ENCODE measurements at regions of chr2 and their contacts with region 1.

Region 1: DNA sequence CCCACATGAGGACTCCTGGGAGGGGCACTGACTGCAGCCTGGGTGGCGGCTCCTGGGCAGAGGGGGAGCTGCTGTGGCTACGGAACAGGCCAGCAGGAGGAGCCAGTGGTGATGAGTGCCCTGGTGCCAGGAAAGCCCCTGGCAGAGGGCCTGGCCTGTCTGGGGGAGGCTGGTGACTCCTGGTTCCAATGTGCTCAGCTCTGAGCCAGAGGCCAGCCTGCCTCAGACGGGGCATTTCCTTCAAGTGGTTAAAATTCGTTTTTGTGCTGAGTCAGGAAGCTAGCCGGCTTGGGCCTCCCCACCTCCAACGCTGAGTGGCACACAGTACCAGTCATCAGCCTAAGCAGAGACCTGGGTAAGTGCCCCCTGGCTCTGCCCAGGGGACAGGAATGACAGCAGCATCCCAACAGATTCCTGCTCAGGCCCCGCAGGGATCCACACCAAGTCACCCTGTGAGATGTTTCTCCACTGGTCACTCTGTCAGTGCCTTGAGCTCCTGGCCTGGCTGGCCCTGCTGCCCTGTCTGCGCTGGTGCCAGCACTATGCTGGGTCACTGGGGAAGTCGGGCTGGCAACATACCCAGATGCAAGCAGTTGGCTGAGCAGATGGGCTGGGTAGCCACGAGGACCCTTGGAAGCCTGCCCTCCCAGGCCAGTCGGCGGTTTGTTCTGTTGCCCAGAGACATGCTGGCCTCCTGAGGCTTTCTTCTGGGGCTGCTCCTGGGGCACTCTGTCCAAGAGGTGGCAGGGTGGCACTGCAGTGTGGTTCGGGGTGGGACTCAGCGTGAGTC is 7.1 kb upstream of the KLF11 start:
- DNase-seq: peak; percentile 82
- H3K4me3 ChIP-seq: no peak overlapping the region
- H3K27ac ChIP-seq: no peak overlapping the region
- H3K4me1 ChIP-seq: peaks cover 11% of the 10 kb centered on the region
- H3K27me3 ChIP-seq: no peaks in the 10 kb centered on the region
- CTCF ChIP-seq: peak; percentile 51 to 72

Region 2: DNA sequence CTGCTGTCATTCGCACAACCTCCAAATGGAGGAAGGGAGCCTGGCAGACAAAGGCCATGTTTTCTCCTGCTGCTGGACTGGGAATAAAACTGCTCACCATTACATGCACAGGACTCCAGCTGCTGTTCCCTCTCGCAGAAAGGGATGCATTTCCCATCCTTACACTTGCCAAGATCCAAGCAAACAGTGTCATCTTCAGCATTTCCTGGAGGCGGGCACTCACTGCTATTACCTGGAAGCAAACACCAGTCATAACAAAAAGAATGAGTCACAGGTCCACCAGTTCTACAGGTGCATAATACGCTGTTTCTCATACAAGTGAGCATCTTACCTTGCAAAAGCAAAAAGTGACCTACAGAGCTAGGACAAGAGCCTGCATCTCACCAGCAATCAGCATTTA is 539.3 kb before region 1 on chr2:
- CTCF ChIA-PET with region 1: no interaction called
- dilution Hi-C with region 1: loop called (anchors 10 kb)
- in situ Hi-C with region 1: no loop called
- intact Hi-C with region 1: no loop called
- DNase-seq: peak; percentile 46
- H3K4me3 ChIP-seq: no peak overlapping the region
- H3K27ac ChIP-seq: no peak overlapping the region
- H3K4me1 ChIP-seq: no peaks in the 10 kb centered on the region
- H3K27me3 ChIP-seq: no peaks in the 10 kb centered on the region
- CTCF ChIP-seq: no peak

Region 3: GRCh38 chr2:9972621-9973479 is 63.4 kb before region 1 on chr2:
- CTCF ChIA-PET with region 1: no interaction called
- dilution Hi-C with region 1: loop called (anchors 5 kb)
- in situ Hi-C with region 1: no loop called
- intact Hi-C with region 1: no loop called
- DNase-seq: peak; percentile 84
- H3K4me3 ChIP-seq: no peak overlapping the region
- H3K27ac ChIP-seq: no peak overlapping the region
- H3K4me1 ChIP-seq: peaks cover 19% of the 10 kb centered on the region
- H3K27me3 ChIP-seq: no peaks in the 10 kb centered on the region
- CTCF ChIP-seq: no peak

Measured in mammary epithelial cell (primary cell).